ENCODE measurements at regions of chr15 and their contacts with region 1.

Region 1: GRCh38 chr15:32979710-32980109 is 214.8 kb downstream of the FMN1 start:
- DNase-seq: no peak
- ATAC-seq: no peak

Region 2: DNA sequence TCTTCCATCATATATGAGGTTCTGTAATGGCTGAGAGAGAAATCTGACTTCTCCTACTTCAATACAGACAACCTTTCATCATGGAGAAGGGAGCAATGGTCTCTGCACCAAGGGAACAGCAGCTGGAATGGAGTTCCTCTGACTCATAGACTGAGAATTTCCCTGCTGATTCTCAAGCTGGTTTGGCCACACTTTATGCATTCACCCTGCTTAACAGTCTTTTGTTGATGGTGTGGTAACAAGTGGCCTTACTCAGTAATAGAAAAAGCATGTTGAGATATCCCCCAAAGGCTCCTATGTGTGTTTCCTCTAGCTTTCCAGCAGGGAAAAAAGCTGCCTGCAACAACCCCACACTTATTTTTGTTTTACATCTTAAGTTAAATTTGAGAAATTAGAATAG is 123.8 kb before region 1 on chr15:
- intact Hi-C with region 1: loop called (anchors 10 kb)
- DNase-seq: no peak
- ATAC-seq: peak; percentile 89

Measured in Right ventricle myocardium superior (tissue), 1 donor.